ENCODE measurements at regions of chr17 and their contacts with region 1.

Region 1: GRCh38 chr17:73156166-73156840 is 8.5 kb upstream of the SSTR2 start:
- DNase-seq: peak; percentile 85

Region 2: GRCh38 chr17:72556944-72557826 is 599.1 kb before region 1 on chr17:
- intact Hi-C with region 1: loop called (anchors 5 kb)
- DNase-seq: no peak

Region 3: DNA sequence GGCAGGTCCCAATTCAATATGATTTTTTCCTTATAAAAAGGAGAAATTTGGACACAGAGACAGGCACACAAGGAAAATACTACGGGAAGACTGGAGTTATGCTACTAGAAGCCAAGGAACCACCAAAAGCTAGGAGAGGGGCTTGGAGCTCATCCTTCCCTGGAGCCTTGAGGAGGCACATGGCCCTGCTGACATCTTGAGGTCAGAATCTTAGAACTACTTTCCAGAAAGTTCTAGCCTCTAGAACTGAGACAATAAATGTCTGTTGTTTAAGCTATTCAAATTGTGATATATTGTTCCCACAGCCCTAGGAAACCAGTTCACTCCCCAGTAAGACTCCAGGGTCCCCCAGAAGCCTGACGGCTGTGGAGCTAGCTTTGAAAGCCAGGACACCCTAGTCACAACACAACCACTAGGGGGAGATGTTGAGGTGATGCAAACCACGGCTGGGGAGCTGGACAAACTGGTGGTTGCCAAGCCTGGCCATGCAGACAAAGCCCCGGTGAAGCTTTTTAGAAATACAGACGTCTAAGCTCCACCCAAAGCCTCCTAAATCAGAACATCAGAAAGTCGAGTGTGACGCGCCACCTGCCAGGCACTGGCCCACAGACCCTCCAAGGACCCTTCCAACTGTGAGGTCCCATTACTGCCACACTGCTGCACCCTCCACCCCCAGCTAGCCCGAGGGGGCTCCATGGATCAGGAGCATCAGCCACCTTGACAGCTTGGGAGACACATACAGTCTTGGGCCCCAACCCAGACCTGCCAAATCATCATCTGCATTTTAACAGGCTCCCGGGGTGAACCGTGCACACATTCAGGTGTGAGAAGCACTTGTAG is 170.2 kb before region 1 on chr17:
- intact Hi-C with region 1: loop called (anchors 10 kb)
- DNase-seq: peak; percentile 81

Region 4: DNA sequence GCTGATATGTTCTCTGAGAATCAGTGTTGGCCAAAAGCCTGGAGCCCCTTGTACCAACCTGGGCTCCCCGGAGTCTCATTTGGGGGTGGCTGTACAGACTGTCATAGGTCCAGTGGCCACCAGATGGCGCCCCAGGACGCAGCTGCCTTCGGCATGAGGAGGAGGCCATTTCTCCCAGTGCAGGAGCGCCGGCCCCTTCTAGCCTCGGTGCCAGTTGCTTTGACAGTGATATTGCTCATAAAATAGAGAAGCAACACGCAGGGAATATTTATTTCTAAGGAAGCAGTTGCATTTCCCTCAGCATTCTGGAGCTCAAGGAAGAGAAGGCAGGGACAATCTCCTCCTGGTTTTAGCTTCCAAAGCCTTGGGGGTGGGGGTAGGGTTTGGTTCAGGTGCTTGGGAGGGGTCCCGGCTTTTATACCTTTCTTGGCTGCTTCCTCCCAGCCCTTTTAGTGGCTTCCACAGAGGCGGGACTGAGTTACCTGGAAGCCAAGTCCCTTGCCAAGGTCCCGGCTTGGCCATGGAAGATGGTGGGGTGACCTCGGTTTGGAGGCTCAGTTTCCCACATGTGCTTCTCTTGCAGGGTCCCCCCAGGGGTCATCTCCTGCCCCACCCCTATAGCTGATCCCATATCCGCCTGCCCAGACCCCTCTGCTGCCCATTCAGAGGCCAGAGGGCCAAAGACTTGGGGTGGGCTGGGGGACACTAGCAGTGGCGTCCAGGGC is 273.3 kb after region 1 on chr17:
- intact Hi-C with region 1: no loop called
- DNase-seq: peak; percentile 91